ENCODE measurements at regions of chr12 and their contacts with region 1.

Region 1: GRCh38 chr12:12696562-12697383 is 790 bp upstream of the GPR19 start:
- DNase-seq: peak; percentile 98
- H3K4me3 Mint-ChIP-seq: peak overlapping the region; percentile 94
- H3K27ac Mint-ChIP-seq: peak overlapping the region; percentile 99
- H3K4me1 Mint-ChIP-seq: peaks cover 60% of the 10 kb centered on the region
- H3K27me3 Mint-ChIP-seq: no peaks in the 10 kb centered on the region

Region 2: GRCh38 chr12:12356886-12357718 is 339.7 kb before region 1 on chr12 and contains the start of gene BORCS5:
- intact Hi-C with region 1: loop called (anchors 2 kb)
- DNase-seq: peak; percentile 100
- H3K4me3 Mint-ChIP-seq: peak within 1 kb of the TSS; percentile 98
- H3K27ac Mint-ChIP-seq: peak within 1 kb of the TSS; percentile 99
- H3K4me1 Mint-ChIP-seq: peaks cover 46% of the 10 kb centered on the region
- H3K27me3 Mint-ChIP-seq: no peaks in the 10 kb centered on the region
- total RNA-seq, gene BORCS5: 34.0 and 37.0 TPM in 2 replicates

Region 3: GRCh38 chr12:12654691-12655460 is 41.9 kb before region 1 on chr12:
- intact Hi-C with region 1: loop called (anchors 5 kb)
- DNase-seq: no peak
- H3K4me3 Mint-ChIP-seq: no peak overlapping the region
- H3K27ac Mint-ChIP-seq: no peak overlapping the region
- H3K4me1 Mint-ChIP-seq: peaks cover 9% of the 10 kb centered on the region
- H3K27me3 Mint-ChIP-seq: no peaks in the 10 kb centered on the region

Measured in activated CD4-positive, alpha-beta T cell treated with anti-CD3 and anti-CD28 coated beads, Interleukin-2, amount 10 ng/mL, durations not matched to agents 24 days and 14 days (primary cell).